ENCODE measurements at regions of chr22 and their contacts with region 1.

Region 1: DNA sequence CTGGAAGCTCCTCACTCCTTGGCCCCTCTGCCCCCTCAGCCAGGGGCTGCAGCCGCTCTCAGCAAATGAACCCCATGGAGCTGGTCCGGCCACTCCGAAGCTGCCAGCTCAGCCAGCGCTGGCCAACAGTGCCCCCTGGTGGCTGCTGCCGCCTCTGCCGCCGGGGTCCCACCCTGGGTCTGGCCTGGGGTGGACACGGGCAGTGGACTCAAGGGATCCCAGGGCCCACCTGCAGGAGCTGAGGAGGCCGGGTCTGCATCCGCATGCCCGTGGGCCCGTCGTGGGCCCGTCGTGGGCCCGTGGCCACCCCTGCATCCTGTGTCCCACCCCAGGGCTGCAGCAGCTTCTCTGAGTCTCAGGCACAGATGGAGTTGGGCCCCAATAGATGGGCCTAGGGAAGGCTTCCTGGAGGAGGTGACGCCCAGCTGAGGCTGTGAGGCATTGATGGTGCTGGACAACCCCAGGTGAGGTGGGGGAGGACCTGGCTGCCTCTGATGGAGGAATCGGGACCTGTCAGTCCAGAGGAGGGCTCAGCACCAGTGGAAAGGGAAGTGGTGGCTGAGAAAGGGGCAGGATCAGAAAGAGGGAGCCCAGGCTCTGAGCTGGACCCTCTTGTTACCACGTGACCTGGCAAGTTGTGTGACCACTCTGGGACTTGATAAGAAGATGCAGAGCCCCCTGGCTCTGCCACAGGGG is 522.3 kb downstream of the BRD1 start:
- DNase-seq: peak; percentile 38 to 85 (median 53)
- ATAC-seq: peak in 3 of 4 donors; percentile 77 to 83 (median 78)
- H3K4me3 ChIP-seq: no peak overlapping the region
- H3K27ac ChIP-seq: no peak overlapping the region
- H3K4me1 ChIP-seq: peaks cover 0 to 8% (median 0%) of the 10 kb centered on the region in 12 donors
- H3K27me3 ChIP-seq: peaks cover 0 to 60% (median 12%) of the 10 kb centered on the region in 9 donors
- CTCF ChIP-seq: peak; percentile 76 to 98 (median 93)
- POLR2A ChIP-seq: no peak

Region 2: DNA sequence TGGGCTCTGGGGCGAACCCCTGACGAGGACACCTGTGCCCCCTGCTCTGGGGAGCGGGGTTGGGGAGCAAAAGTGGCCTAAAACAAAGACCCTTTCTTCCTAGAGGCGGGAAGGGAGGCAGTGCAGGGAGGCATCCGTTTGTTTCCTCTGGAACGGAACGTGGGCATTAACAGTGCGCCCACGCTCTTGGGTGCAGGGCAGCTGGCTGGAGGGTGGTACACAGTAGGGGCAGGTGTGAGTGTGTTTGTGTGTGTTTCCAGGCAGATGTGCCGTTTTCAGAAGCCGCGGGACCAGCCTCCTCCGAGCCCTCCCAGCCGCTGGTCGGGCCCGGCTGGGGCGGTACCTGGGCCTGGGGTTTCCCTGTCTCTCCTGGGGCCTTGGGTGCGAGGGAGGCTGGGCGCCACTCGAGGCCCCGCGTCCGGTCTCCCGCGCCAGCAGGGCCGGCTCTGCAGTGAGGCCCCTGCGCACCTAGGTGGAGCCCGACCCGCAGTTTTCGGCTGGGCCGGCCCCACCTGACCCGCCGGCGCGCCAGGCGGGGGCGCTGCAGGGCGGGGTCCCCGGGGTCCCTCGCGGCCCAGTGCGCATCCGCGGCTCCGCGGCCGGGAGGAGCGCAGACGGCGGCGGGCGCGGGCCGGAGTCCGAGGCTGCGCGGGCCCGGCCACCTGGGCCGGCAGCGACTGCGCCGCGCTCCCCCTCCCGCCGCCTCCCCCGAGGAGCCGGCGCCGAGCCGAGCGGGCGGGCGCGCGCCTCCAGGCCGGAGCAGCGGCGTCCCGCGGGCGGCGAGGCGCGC is 730.4 kb before region 1 on chr22:
- intact Hi-C with region 1: loop called in 8 of 10 experiments (anchors 1 to 10 kb)
- DNase-seq: peak in 3 of 5 donors; percentile 23 to 49 (median 27)
- ATAC-seq: peak in 3 of 4 donors; percentile 69 to 83 (median 77)
- H3K4me3 ChIP-seq: peak overlapping the region in 1 of 12 donors; percentile 44
- H3K27ac ChIP-seq: no peak overlapping the region
- H3K4me1 ChIP-seq: peaks cover 0 to 13% (median 0%) of the 10 kb centered on the region in 12 donors
- H3K27me3 ChIP-seq: peaks cover 17 to 47% (median 29%) of the 10 kb centered on the region in 9 donors
- CTCF ChIP-seq: peak in 9 of 12 donors; percentile 13 to 43 (median 26)
- POLR2A ChIP-seq: no peak

Region 3: GRCh38 chr22:48858121-48858520 is 447.2 kb before region 1 on chr22:
- intact Hi-C with region 1: no loop called
- DNase-seq: no peak
- ATAC-seq: no peak
- H3K4me3 ChIP-seq: no peak overlapping the region
- H3K27ac ChIP-seq: no peak overlapping the region
- H3K4me1 ChIP-seq: no peaks in the 10 kb centered on the region
- H3K27me3 ChIP-seq: peaks cover 0 to 2% (median 0%) of the 10 kb centered on the region in 9 donors
- CTCF ChIP-seq: no peak
- POLR2A ChIP-seq: no peak

Region 4: GRCh38 chr22:48943567-48944432 is 361.6 kb before region 1 on chr22:
- intact Hi-C with region 1: loop called in 3 of 10 experiments (anchors 5 to 10 kb)
- DNase-seq: no peak
- ATAC-seq: peak; percentile 33 to 58 (median 50)
- H3K4me3 ChIP-seq: no peak overlapping the region
- H3K27ac ChIP-seq: no peak overlapping the region
- H3K4me1 ChIP-seq: no peaks in the 10 kb centered on the region
- H3K27me3 ChIP-seq: peaks cover 0 to 10% (median 0%) of the 10 kb centered on the region in 9 donors
- CTCF ChIP-seq: peak in 10 of 12 donors; percentile 24 to 54 (median 38)
- POLR2A ChIP-seq: no peak

Region 5: GRCh38 chr22:49046546-49047361 is 258.6 kb before region 1 on chr22:
- intact Hi-C with region 1: loop called (anchors 1 to 5 kb)
- DNase-seq: peak in 1 of 5 donors; percentile 51
- ATAC-seq: peak in 3 of 4 donors; percentile 69 to 78 (median 77)
- H3K4me3 ChIP-seq: no peak overlapping the region
- H3K27ac ChIP-seq: no peak overlapping the region
- H3K4me1 ChIP-seq: no peaks in the 10 kb centered on the region
- H3K27me3 ChIP-seq: peaks cover 0 to 25% (median 3%) of the 10 kb centered on the region in 9 donors
- CTCF ChIP-seq: peak; percentile 18 to 55 (median 46)
- POLR2A ChIP-seq: no peak

Region 6: GRCh38 chr22:49052023-49052538 is 253.3 kb before region 1 on chr22:
- intact Hi-C with region 1: loop called in 8 of 10 experiments (anchors 2 to 5 kb)
- DNase-seq: no peak
- ATAC-seq: peak in 2 of 4 donors; percentile 53 to 93
- H3K4me3 ChIP-seq: peak overlapping the region in 9 of 12 donors; percentile 17 to 55 (median 36)
- H3K27ac ChIP-seq: no peak overlapping the region
- H3K4me1 ChIP-seq: no peaks in the 10 kb centered on the region
- H3K27me3 ChIP-seq: peaks cover 0 to 6% (median 0%) of the 10 kb centered on the region in 9 donors
- CTCF ChIP-seq: no peak
- POLR2A ChIP-seq: no peak

Region 7: DNA sequence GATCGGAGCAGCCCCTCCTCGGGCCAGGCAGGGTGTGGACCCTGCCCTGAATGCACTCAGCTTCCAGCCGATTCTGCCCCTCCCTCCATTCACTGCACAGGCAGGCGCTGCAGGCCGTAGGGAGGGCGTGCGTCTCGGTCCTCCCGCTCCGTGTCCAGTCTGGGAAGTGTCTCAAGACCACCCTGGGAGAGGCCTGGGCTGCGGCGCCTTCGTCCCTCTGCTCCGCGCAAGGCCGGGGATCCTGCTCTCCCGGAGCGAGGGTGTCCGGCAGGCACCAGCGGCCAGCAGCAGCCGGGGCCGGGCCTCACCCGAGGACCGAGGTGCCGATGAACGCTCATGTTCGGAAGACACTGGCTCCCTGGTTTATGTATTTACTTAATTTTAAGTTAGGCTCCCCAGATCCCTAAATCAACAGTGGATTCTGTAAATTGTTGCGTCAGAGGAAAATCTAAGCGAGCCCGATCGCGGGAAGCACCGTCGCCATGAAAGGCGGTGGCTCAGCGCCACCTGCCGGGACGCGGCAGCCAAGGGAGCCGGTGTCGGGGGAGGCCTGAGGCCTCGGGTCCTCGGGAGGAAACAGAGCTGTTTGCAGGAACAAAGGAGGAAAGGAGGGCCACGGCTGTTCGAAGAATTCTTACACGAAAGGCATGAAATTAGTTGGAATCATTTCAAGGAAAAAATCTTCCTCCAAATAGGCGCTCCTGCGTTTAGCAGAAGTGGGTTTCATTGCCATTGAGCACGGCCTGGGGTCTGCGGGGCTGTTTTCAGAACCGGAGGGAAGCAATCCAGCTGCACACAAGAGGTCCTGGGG is 327.0 kb after region 1 on chr22:
- intact Hi-C with region 1: loop called in 3 of 10 experiments (anchors 5 to 10 kb)
- DNase-seq: peak; percentile 48 to 81 (median 56)
- ATAC-seq: peak; percentile 69 to 86 (median 78)
- H3K4me3 ChIP-seq: peak overlapping the region in 11 of 12 donors; percentile 12 to 53 (median 44)
- H3K27ac ChIP-seq: peak overlapping the region in 4 of 12 donors; percentile 12 to 33 (median 26)
- H3K4me1 ChIP-seq: peaks cover 0 to 14% (median 11%) of the 10 kb centered on the region in 12 donors
- H3K27me3 ChIP-seq: no peaks in the 10 kb centered on the region
- CTCF ChIP-seq: peak; percentile 62 to 94 (median 82)
- POLR2A ChIP-seq: no peak

Region 8: GRCh38 chr22:49670456-49671330 is 365.3 kb after region 1 on chr22:
- intact Hi-C with region 1: no loop called
- DNase-seq: peak in 1 of 5 donors; percentile 17
- ATAC-seq: peak in 3 of 4 donors; percentile 49 to 69 (median 65)
- H3K4me3 ChIP-seq: peak overlapping the region in 11 of 12 donors; percentile 18 to 55 (median 50)
- H3K27ac ChIP-seq: peak overlapping the region in 7 of 12 donors; percentile 0 to 76 (median 37)
- H3K4me1 ChIP-seq: peaks cover 0 to 23% (median 14%) of the 10 kb centered on the region in 12 donors
- H3K27me3 ChIP-seq: peaks cover 0 to 63% (median 37%) of the 10 kb centered on the region in 9 donors
- CTCF ChIP-seq: no peak
- POLR2A ChIP-seq: no peak

Region 9: GRCh38 chr22:49724893-49725474 is 419.6 kb after region 1 on chr22:
- intact Hi-C with region 1: loop called in 1 of 10 experiments (anchors 5 kb)
- DNase-seq: peak; percentile 56 to 78 (median 63)
- ATAC-seq: peak; percentile 55 to 96 (median 93)
- H3K4me3 ChIP-seq: peak overlapping the region; percentile 2 to 56 (median 44)
- H3K27ac ChIP-seq: no peak overlapping the region
- H3K4me1 ChIP-seq: peaks cover 0 to 14% (median 4%) of the 10 kb centered on the region in 12 donors
- H3K27me3 ChIP-seq: peaks cover 6 to 67% (median 30%) of the 10 kb centered on the region in 9 donors
- CTCF ChIP-seq: peak; percentile 59 to 83 (median 72)
- POLR2A ChIP-seq: no peak